ENCODE measurements at regions of chr20 and their contacts with region 1.

Region 1: DNA sequence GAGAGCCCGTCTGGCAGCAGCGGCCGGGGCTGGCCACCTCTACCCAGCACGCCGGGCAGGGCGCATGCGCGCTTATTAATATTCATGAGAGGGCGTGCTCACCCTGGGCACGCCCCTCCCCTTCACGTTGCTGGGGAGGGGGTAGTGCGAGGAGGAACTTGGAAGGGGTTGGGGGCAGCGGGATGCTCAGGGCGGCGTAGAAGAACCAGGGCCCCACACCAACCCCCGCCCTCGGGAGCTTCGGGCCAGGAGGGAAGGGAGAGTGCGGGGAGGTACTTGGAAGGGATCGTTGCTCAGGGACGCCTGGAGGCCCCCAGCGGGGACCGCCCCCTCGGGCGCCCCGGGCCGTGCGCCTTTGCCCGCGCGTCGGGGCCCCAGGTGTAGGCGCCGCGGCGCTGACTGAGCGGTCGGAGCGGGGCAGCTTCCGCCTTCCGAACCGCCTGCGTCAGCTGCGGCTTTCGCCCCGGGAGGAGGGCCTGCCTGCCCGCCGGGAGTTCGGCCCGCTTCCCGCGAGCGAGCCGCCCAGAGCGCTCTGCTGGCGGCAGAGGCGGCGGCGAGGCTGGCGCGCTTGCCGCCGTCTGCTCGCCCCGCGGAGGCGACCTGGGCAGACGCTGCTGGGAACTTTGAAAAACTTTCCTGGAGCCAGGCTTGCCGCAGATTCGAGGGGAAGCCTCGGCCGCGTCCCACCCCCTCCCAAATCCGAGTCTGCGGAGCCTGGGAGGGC is at the start of gene JAG1:
- DNase-seq: peak; percentile 97 to 98
- ATAC-seq: peak; percentile 90
- H3K4me3 ChIP-seq: peak within 1 kb of the TSS; percentile 93 to 97
- H3K27ac ChIP-seq: peak within 1 kb of the TSS; percentile 95 to 97
- H3K4me1 ChIP-seq: peaks cover 0 to 2% of the 10 kb centered on the region in 2 donors
- H3K27me3 ChIP-seq: no peaks in the 10 kb centered on the region
- total RNA-seq, gene JAG1: 133 to 226 TPM

Region 2: GRCh38 chr20:10558635-10559187 is 115.4 kb before region 1 on chr20:
- intact Hi-C with region 1: loop called (anchors 2 to 5 kb)
- DNase-seq: no peak
- ATAC-seq: peak; percentile 76
- H3K4me3 ChIP-seq: peak overlapping the region; percentile 8 to 69
- H3K27ac ChIP-seq: peak overlapping the region; percentile 82 to 97
- H3K4me1 ChIP-seq: peaks cover 4 to 7% of the 10 kb centered on the region in 2 donors
- H3K27me3 ChIP-seq: no peaks in the 10 kb centered on the region

Region 3: GRCh38 chr20:10857352-10858070 is 183.4 kb after region 1 on chr20:
- intact Hi-C with region 1: loop called (anchors 5 to 10 kb)
- DNase-seq: peak; percentile 61 to 79
- ATAC-seq: peak; percentile 88
- H3K4me3 ChIP-seq: no peak overlapping the region
- H3K27ac ChIP-seq: no peak overlapping the region
- H3K4me1 ChIP-seq: peaks cover 3 to 8% of the 10 kb centered on the region in 2 donors
- H3K27me3 ChIP-seq: no peaks in the 10 kb centered on the region

Region 4: GRCh38 chr20:10919396-10920140 is 245.4 kb after region 1 on chr20:
- intact Hi-C with region 1: loop called in 1 of 2 experiments (anchors 5 kb)
- DNase-seq: peak; percentile 79 to 81
- ATAC-seq: peak; percentile 70
- H3K4me3 ChIP-seq: no peak overlapping the region
- H3K27ac ChIP-seq: peak overlapping the region in 1 of 2 donors; percentile 52
- H3K4me1 ChIP-seq: peaks cover 0 to 3% of the 10 kb centered on the region in 2 donors
- H3K27me3 ChIP-seq: no peaks in the 10 kb centered on the region

Region 5: DNA sequence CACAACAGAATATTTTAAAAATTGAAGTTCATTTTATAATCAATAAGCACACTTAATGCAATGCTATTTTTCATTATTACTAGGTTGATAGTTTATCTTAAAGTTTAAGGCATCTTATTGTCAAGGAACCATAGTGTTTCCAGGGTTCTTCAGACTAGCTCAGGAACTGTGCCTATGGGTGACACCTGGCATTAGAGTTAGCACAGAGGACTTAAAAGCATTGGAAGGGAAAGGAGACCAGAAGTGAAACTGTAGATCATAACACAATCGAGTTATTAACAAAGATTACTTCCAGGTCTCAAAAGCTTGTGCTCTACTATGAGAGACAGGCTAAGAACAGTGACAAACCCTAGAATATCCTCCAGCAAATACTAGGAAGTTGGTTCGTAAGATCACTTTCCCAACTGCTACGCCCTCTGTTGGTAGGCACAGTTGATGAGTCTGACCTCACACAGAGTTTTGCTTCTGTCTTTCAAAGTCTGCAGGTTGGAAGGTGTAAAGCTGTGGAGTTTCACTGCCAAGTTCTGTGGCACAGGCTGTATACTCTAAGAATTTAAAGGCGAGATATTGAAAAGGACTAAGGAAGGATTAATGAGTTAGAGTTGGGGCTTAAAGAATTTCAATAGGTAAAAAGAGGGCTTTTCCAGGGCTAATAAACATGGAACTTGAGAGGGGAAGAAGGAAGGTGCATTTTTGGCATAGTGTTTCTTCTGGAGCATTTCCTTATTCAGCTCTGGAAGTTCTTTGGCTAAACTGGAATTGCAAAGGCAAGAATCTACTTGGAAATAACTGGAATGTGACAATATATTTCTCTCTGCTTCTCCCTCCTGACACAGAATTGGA is 531.0 kb after region 1 on chr20:
- intact Hi-C with region 1: loop called in 1 of 2 experiments (anchors 5 kb)
- DNase-seq: peak in 1 of 2 donors; percentile 65
- ATAC-seq: peak; percentile 80
- H3K4me3 ChIP-seq: no peak overlapping the region
- H3K27ac ChIP-seq: peak overlapping the region in 1 of 2 donors; percentile 44
- H3K4me1 ChIP-seq: peaks cover 0 to 3% of the 10 kb centered on the region in 2 donors
- H3K27me3 ChIP-seq: no peaks in the 10 kb centered on the region

Region 6: DNA sequence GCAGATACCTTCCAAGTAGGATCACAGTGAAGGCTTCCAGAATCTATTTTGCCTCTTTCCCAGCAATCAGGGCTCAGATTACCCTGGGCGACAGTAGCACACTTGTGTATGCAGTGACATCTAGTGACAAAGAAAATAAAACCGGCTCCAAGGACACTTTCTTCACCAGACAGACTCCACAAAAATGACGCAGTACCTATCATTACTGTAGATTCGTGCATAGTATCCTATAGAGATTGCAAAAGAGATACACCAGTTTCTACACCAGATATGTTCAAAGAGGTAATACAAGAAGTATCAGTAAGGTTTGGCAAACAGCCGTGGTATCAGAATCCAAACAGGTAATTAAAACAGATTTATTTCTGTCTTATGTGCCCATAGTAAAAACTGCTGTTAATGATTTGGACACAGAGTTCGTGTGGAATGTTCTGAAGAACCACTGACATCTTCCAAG is 600.0 kb after region 1 on chr20:
- intact Hi-C with region 1: loop called (anchors 1 to 10 kb)
- DNase-seq: peak in 1 of 2 donors; percentile 48
- ATAC-seq: peak; percentile 86
- H3K4me3 ChIP-seq: no peak overlapping the region
- H3K27ac ChIP-seq: no peak overlapping the region
- H3K4me1 ChIP-seq: peaks cover 0 to 2% of the 10 kb centered on the region in 2 donors
- H3K27me3 ChIP-seq: no peaks in the 10 kb centered on the region